Activated naive CD4-positive, alpha-beta T cell treated with anti-CD3 and anti-CD28 coated beads for 36 hours (primary cell): ENCODE measurements at regions of chr6 and their contacts with region 1.

Region 1: DNA sequence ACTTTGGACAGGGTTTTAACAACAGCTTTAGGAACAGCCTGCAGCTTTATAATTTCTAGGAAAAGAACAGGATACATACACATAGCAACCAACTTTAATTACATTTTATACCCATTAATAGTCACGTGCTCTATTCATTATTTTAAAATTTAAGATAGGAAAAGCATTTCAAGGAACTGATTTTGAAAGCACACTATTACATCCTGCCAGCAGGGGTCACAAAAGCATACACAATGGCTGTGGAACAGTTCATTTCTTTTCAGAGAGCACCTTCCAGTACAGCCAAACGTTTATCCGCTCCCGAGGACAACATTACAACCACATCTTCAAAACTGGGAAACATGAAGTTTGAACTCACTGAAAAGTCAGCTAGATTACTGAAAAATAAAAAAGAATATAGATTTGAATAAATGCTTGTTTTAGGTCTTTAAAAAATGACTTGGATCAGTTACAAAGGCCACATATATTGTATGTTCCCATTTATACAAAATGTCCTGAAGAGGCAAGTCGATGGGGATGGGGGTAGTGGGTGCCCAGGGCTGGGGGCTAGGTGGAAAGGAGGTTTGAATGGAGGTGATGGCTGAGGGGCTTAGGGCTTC is 104.6 kb upstream of the EXOC2 start:
- DNase-seq: peak; percentile 68
- H3K4me3 Mint-ChIP-seq: no peak overlapping the region
- H3K27ac Mint-ChIP-seq: no peak overlapping the region
- H3K4me1 Mint-ChIP-seq: no peaks in the 10 kb centered on the region
- H3K27me3 Mint-ChIP-seq: peaks cover 51% of the 10 kb centered on the region

Region 2: GRCh38 chr6:1311400-1312202 is 514.0 kb after region 1 on chr6 and contains the start of gene FOXQ1:
- CTCF ChIA-PET with region 1: no interaction called
- intact Hi-C with region 1: loop called (anchors 5 kb)
- DNase-seq: no peak
- H3K4me3 Mint-ChIP-seq: peak within 1 kb of the TSS; percentile 69
- H3K27ac Mint-ChIP-seq: no peak within 1 kb of the TSS
- H3K4me1 Mint-ChIP-seq: peaks cover 28% of the 10 kb centered on the region
- H3K27me3 Mint-ChIP-seq: peaks cover 61% of the 10 kb centered on the region
- total RNA-seq, gene FOXQ1: not detected

Region 3: DNA sequence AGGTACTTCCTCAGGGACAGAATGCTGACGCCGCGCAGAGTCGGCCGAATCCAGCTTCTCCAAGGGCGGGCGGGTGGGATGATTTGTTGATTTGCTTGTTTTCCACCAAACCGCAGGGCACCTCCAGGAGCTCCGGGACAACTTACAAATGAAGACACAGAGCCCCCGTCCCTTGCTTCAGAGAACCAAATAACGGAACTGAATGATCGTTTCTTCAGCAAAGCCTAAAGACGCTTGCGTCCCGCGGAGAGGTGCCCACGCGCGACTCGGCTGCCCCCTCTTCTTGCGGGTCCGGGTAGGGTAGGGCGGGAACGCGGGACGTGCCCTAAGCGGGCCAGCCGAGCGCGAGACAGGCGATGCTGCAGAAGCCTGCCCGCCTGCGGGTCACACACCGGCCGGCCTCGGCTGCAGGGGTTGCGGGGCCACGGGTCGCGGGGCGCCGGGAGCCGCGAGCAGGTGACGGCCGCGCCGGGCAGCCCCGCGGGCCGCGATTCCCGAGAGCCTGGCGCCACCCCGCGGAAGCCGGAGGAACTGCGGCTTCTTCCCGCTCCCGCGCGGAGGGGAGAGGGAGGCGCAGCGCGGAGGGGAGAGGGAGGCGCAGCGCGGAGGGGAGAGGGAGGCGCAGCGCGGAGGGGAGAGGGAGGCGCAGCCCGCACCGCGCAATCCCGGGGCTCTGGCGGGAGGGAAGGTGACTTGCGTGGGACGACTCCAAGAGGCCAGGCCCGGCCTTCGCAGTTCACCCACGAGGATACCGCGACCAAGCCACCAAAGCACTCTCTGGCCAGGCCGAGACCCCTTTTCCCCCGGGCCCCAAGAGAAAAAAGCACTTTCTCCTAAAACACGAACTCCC is 584.1 kb after region 1 on chr6:
- CTCF ChIA-PET with region 1: interaction called, 4 read pairs
- intact Hi-C with region 1: loop called (anchors 1 kb)
- DNase-seq: peak; percentile 63
- H3K4me3 Mint-ChIP-seq: no peak overlapping the region
- H3K27ac Mint-ChIP-seq: no peak overlapping the region
- H3K4me1 Mint-ChIP-seq: peaks cover 41% of the 10 kb centered on the region
- H3K27me3 Mint-ChIP-seq: peaks cover 74% of the 10 kb centered on the region

Region 4: DNA sequence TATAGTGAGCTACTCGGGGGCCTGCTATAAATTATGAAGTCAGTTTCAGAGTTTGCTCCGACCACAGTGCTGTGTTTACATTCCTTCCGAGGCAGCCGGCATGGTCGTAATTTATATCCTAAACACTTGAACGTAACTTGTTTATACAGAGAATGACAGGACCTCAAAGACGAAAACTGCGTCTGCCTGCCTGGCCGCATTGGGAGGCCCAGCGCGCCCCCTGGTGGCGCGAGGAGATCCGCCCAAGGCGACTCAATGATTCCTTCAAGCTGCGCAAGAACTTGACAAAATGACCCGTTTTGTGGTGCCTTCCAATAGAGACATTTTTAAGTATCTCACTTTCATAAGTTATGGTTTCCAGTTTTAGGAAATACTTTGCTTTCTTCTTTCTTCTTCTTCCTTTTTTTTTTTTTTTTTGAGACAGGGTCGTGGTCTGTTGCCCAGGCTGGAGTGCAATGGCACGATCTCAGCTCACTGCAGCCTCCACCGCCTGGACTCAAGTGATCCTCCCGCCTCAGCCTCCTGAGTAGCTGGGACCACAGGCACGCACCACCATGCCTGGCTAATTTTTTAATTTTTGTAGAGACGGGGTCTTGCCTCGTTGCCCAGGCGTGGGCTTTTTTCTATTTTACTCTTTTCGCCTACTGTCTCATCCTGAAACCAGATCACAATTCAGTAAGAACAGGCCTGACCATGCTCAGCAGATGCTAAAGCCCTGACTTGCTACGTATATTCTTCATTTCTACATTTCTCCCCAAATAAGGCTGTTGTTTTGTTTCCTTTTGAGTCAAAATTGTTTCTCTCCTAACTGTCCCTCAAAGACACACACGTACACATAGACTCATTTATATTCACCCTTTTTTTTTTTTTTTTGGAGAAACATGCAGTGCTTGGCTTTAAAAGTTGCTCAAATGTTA is 599.6 kb after region 1 on chr6:
- CTCF ChIA-PET with region 1: interaction called, 16 read pairs
- intact Hi-C with region 1: loop called (anchors 1 kb)
- DNase-seq: peak; percentile 80
- H3K4me3 Mint-ChIP-seq: no peak overlapping the region
- H3K27ac Mint-ChIP-seq: no peak overlapping the region
- H3K4me1 Mint-ChIP-seq: peaks cover 10% of the 10 kb centered on the region
- H3K27me3 Mint-ChIP-seq: peaks cover 53% of the 10 kb centered on the region

Region 5: DNA sequence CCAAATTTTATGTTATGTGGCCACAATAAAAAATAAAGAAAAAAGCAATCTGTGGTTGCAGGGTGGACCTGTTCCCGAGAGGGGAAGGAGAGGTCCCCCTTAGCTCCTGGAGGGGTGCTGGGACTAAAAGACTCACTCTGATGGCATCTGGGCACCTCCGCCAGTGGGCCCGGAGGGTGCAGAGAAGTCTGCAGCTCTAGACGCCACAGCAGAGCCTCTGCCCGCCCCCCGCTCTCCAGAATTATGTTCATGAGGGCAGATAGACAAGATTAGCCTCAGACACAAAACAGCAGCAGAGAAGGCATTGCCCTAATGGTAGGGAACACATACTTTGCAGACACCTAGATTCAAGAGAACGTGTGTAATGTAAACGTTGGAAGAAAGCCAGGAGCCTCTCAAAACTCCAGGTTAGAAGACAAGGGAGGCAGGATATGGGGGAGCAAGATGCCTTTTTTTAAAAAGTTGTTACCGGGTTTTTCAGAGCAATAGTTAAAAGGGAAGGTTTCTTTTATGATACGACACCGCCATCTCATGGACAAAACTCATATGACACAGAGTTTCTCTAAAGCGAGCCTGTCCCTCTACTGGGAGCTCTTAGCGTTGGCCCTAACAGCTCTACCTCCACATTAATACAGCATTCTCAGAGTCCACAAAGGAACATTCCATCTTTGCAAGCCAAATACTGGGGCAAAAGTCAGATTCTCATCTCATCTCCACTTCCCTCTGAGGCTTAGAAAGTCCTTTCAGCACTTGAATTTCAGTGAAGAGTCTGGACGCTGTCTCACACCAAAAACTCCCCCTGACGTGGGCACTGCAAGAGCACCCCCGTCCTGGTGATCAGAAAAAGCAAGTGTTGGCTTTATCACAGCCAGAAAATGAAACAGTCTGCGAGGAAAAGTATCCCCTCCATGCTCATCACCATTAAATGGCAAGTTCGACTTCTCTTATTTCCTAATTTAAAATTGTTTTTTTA is 639.0 kb after region 1 on chr6:
- CTCF ChIA-PET with region 1: no interaction called
- intact Hi-C with region 1: loop called (anchors 2 kb)
- DNase-seq: peak; percentile 63
- H3K4me3 Mint-ChIP-seq: no peak overlapping the region
- H3K27ac Mint-ChIP-seq: no peak overlapping the region
- H3K4me1 Mint-ChIP-seq: no peaks in the 10 kb centered on the region
- H3K27me3 Mint-ChIP-seq: peaks cover 42% of the 10 kb centered on the region